Activated CD8-positive, alpha-beta T cell treated with anti-CD3 and anti-CD28 coated beads for 36 hours (primary cell): ENCODE measurements at regions of chr7 and their contacts with region 1.

Region 1: GRCh38 chr7:130896898-130897514 is 163.0 kb upstream of the KLF14 start:
- DNase-seq: peak; percentile 81
- ATAC-seq: peak; percentile 64
- H3K4me3 Mint-ChIP-seq: peak overlapping the region; percentile 40
- H3K27ac Mint-ChIP-seq: peak overlapping the region; percentile 87
- H3K4me1 Mint-ChIP-seq: peaks cover 91% of the 10 kb centered on the region
- H3K27me3 Mint-ChIP-seq: no peaks in the 10 kb centered on the region
- CTCF ChIP-seq: peak; percentile 73

Region 2: GRCh38 chr7:130880668-130881067 is 16.3 kb before region 1 on chr7:
- CTCF ChIA-PET with region 1: interaction called, 15 read pairs
- POLR2A ChIA-PET with region 1: interaction called, 3 read pairs
- intact Hi-C with region 1: no loop called
- DNase-seq: no peak
- ATAC-seq: no peak
- H3K4me3 Mint-ChIP-seq: no peak overlapping the region
- H3K27ac Mint-ChIP-seq: peak overlapping the region; percentile 61
- H3K4me1 Mint-ChIP-seq: peaks cover 53% of the 10 kb centered on the region
- H3K27me3 Mint-ChIP-seq: no peaks in the 10 kb centered on the region
- CTCF ChIP-seq: no peak

Region 3: GRCh38 chr7:130921391-130922180 is 24.6 kb after region 1 on chr7:
- CTCF ChIA-PET with region 1: interaction called, 12 read pairs
- POLR2A ChIA-PET with region 1: interaction called, 4 read pairs
- intact Hi-C with region 1: no loop called
- DNase-seq: peak; percentile 22
- ATAC-seq: no peak
- H3K4me3 Mint-ChIP-seq: no peak overlapping the region
- H3K27ac Mint-ChIP-seq: peak overlapping the region; percentile 66
- H3K4me1 Mint-ChIP-seq: peaks cover 89% of the 10 kb centered on the region
- H3K27me3 Mint-ChIP-seq: no peaks in the 10 kb centered on the region
- CTCF ChIP-seq: no peak

Region 4: GRCh38 chr7:130935564-130936157 is 38.7 kb after region 1 on chr7:
- CTCF ChIA-PET with region 1: interaction called, 20 read pairs
- POLR2A ChIA-PET with region 1: interaction called, 5 read pairs
- intact Hi-C with region 1: no loop called
- DNase-seq: no peak
- ATAC-seq: no peak
- H3K4me3 Mint-ChIP-seq: no peak overlapping the region
- H3K27ac Mint-ChIP-seq: peak overlapping the region; percentile 52
- H3K4me1 Mint-ChIP-seq: peaks cover 81% of the 10 kb centered on the region
- H3K27me3 Mint-ChIP-seq: no peaks in the 10 kb centered on the region
- CTCF ChIP-seq: no peak

Region 5: DNA sequence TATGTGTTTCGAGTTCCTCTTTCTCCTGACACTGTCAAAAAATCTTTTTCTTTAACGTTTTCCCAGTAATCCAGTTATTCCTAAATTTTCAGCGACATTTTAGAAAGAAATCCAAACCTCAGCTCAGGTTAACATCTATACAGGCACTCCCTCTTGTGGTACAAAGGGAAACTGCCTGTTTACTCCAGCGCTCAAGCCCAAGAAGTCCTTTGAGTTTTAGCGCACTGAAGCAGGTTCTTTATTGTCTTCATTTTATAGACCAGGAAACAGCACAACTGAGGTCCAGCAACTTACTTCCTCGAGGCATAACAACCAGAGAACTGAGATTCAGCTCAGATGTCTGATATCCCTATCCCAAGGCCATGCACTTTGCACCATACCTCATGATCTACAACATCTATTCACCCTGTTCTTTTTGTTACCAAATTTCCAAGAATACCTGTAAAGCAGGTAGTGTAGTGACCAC is 143.5 kb after region 1 on chr7:
- CTCF ChIA-PET with region 1: interaction called, 31 read pairs
- POLR2A ChIA-PET with region 1: interaction called, 5 read pairs
- intact Hi-C with region 1: loop called (anchors 5 kb)
- DNase-seq: peak; percentile 75
- ATAC-seq: peak; percentile 84
- H3K4me3 Mint-ChIP-seq: peak overlapping the region; percentile 30
- H3K27ac Mint-ChIP-seq: peak overlapping the region; percentile 70
- H3K4me1 Mint-ChIP-seq: peaks cover 62% of the 10 kb centered on the region
- H3K27me3 Mint-ChIP-seq: no peaks in the 10 kb centered on the region
- CTCF ChIP-seq: peak; percentile 97